Activated B cell treated with CpG ODN at 0.5 μM for 24 hours (primary cell): ENCODE measurements at regions of chr3 and their contacts with region 1.

Region 1: GRCh38 chr3:18295171-18295920 is 129.8 kb downstream of the SATB1 start:
- DNase-seq: peak; percentile 29
- ATAC-seq: peak; percentile 77
- H3K4me3 Mint-ChIP-seq: no peak overlapping the region
- H3K27ac Mint-ChIP-seq: no peak overlapping the region
- H3K4me1 Mint-ChIP-seq: peaks cover 5% of the 10 kb centered on the region
- H3K27me3 Mint-ChIP-seq: no peaks in the 10 kb centered on the region
- CTCF ChIP-seq: peak; percentile 42

Region 2: GRCh38 chr3:17645072-17645698 is 650.2 kb before region 1 on chr3:
- CTCF ChIA-PET with region 1: no interaction called
- POLR2A ChIA-PET with region 1: no interaction called
- intact Hi-C with region 1: loop called (anchors 10 kb)
- DNase-seq: no peak
- ATAC-seq: no peak
- H3K4me3 Mint-ChIP-seq: no peak overlapping the region
- H3K27ac Mint-ChIP-seq: no peak overlapping the region
- H3K4me1 Mint-ChIP-seq: peaks cover 9% of the 10 kb centered on the region
- H3K27me3 Mint-ChIP-seq: no peaks in the 10 kb centered on the region
- CTCF ChIP-seq: peak; percentile 35

Region 3: GRCh38 chr3:17894434-17895060 is 400.8 kb before region 1 on chr3:
- CTCF ChIA-PET with region 1: interaction called, 15 read pairs
- POLR2A ChIA-PET with region 1: no interaction called
- intact Hi-C with region 1: no loop called
- DNase-seq: no peak
- ATAC-seq: no peak
- H3K4me3 Mint-ChIP-seq: no peak overlapping the region
- H3K27ac Mint-ChIP-seq: no peak overlapping the region
- H3K4me1 Mint-ChIP-seq: no peaks in the 10 kb centered on the region
- H3K27me3 Mint-ChIP-seq: no peaks in the 10 kb centered on the region
- CTCF ChIP-seq: no peak

Region 4: GRCh38 chr3:17995769-17996168 is 299.6 kb before region 1 on chr3:
- CTCF ChIA-PET with region 1: no interaction called
- POLR2A ChIA-PET with region 1: no interaction called
- intact Hi-C with region 1: loop called (anchors 10 kb)
- DNase-seq: no peak
- ATAC-seq: no peak
- H3K4me3 Mint-ChIP-seq: no peak overlapping the region
- H3K27ac Mint-ChIP-seq: no peak overlapping the region
- H3K4me1 Mint-ChIP-seq: no peaks in the 10 kb centered on the region
- H3K27me3 Mint-ChIP-seq: no peaks in the 10 kb centered on the region
- CTCF ChIP-seq: no peak

Region 5: GRCh38 chr3:18049096-18049495 is 246.2 kb before region 1 on chr3:
- CTCF ChIA-PET with region 1: no interaction called
- POLR2A ChIA-PET with region 1: no interaction called
- intact Hi-C with region 1: no loop called
- DNase-seq: no peak
- ATAC-seq: no peak
- H3K4me3 Mint-ChIP-seq: no peak overlapping the region
- H3K27ac Mint-ChIP-seq: no peak overlapping the region
- H3K4me1 Mint-ChIP-seq: no peaks in the 10 kb centered on the region
- H3K27me3 Mint-ChIP-seq: peaks cover 5% of the 10 kb centered on the region
- CTCF ChIP-seq: no peak

Region 6: DNA sequence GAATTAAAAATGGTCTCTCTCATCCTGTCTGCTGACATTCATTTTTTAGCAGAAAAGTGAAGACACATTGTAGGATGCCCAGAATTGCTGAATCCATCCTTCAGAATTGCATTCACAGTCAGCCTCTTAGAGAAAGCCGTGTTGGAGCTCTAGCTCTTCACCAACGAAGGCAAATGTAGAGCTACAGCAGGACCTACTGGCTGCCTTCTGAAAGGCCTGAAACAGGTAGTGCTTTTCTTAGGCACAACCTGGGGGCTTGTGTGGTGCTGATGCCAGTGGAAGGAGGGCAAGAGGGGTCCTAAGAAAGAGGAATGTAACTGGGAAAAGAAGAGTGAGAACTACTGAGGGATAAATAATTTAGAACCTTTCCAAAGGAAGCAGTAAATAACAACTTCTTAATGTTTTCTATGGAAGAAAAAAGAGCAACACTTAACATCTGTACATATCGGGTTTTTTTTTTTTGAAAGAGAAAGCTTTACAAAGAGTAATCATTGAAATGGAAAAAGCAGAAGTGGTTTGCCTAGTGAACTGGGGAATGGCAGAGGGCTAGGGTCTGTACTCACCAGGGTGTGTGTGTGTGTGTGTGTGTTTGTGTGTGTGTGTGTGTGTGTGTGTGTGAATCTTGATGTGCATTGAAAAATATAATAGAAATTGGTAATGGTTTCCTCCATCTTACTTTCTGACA is 168.0 kb before region 1 on chr3:
- CTCF ChIA-PET with region 1: interaction called, 5 read pairs
- POLR2A ChIA-PET with region 1: no interaction called
- intact Hi-C with region 1: loop called (anchors 1 kb)
- DNase-seq: peak; percentile 25
- ATAC-seq: peak; percentile 95
- H3K4me3 Mint-ChIP-seq: peak overlapping the region; percentile 51
- H3K27ac Mint-ChIP-seq: peak overlapping the region; percentile 67
- H3K4me1 Mint-ChIP-seq: peaks cover 30% of the 10 kb centered on the region
- H3K27me3 Mint-ChIP-seq: no peaks in the 10 kb centered on the region
- CTCF ChIP-seq: no peak

Region 7: DNA sequence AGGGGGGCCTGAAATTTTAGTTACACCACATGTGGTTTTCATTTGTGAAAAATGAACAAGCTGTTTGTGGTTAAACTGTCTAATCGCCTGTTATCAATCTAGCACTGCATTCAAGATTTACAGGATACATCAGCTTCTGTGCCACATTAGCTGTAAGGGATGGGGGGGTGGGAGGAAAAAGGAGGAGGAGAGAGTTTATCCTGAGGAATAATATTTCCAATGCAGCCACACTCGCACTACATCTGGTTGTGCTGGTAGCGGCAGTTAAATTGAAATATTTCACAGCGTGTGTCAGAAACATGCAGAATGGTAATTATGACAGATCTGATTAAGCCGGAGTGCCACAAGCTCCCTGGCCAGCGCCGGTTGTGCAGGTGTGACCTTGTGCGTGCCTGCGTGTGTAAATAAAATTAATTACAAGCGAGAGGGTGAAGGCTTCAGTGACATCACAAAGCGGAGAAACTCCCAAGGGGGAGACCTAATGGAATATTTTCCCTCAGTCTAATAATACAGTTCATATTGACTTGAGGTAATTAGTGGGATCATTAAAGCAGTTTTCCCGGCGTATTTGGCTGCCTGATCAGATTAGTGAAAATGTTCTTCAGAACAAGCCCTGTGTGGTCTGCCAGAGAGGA is 74.3 kb after region 1 on chr3:
- CTCF ChIA-PET with region 1: no interaction called
- POLR2A ChIA-PET with region 1: no interaction called
- intact Hi-C with region 1: no loop called
- DNase-seq: no peak
- ATAC-seq: no peak
- H3K4me3 Mint-ChIP-seq: no peak overlapping the region
- H3K27ac Mint-ChIP-seq: no peak overlapping the region
- H3K4me1 Mint-ChIP-seq: no peaks in the 10 kb centered on the region
- H3K27me3 Mint-ChIP-seq: no peaks in the 10 kb centered on the region
- CTCF ChIP-seq: no peak